CD4-positive, alpha-beta memory T cell (primary cell): ENCODE measurements at regions of chr20 and their contacts with region 1.

Region 1: DNA sequence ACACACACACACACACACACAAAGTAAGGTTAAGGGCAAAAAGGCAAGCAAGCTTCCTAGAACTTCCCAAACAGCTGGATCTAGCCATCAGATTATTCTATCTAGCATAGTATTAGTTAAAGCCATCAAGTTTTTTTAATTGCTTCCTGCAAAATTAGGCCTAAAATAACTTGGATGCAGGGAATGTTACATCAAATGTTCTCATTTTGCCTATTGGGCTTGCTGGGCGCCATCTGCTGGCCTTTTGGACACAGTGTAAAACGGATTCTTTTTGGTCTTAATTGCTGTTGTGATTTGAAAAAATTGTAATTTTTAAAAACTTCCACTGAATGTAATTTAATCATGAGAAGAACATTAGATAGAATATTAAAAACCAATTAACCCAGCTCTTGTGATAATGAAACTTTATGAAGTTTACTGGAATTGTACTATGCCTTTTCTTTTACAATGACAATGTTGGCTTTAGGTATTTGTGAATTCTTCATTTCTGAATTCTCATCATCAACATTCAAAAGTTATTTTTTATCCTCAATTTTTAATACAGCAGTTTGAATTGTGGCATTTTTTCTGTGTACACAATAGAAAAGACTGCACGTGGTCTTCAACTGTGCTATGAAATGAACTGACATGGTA is 6.8 kb downstream of the MKKS start:
- DNase-seq: peak; percentile 33 to 53 (median 43)
- H3K4me3 ChIP-seq: no peak overlapping the region
- H3K4me3 Mint-ChIP-seq: no peak overlapping the region
- H3K27ac ChIP-seq: no peak overlapping the region
- H3K27ac Mint-ChIP-seq: peak overlapping the region in 3 of 7 donors; percentile 1 to 63 (median 43)
- H3K4me1 ChIP-seq: peaks cover 17% of the 10 kb centered on the region
- H3K4me1 Mint-ChIP-seq: peaks cover 27 to 41% (median 38%) of the 10 kb centered on the region in 4 donors
- H3K27me3 ChIP-seq: no peaks in the 10 kb centered on the region
- H3K27me3 Mint-ChIP-seq: no peaks in the 10 kb centered on the region

Region 2: GRCh38 chr20:10381493-10381892 is 45.7 kb before region 1 on chr20:
- CTCF ChIA-PET with region 1: interaction called, 10 read pairs
- POLR2A ChIA-PET with region 1: no interaction called
- intact Hi-C with region 1: no loop called
- DNase-seq: no peak
- H3K4me3 ChIP-seq: no peak overlapping the region
- H3K4me3 Mint-ChIP-seq: no peak overlapping the region
- H3K27ac ChIP-seq: no peak overlapping the region
- H3K27ac Mint-ChIP-seq: no peak overlapping the region
- H3K4me1 ChIP-seq: no peaks in the 10 kb centered on the region
- H3K4me1 Mint-ChIP-seq: no peaks in the 10 kb centered on the region
- H3K27me3 ChIP-seq: no peaks in the 10 kb centered on the region
- H3K27me3 Mint-ChIP-seq: peaks cover 3 to 7% of the 10 kb centered on the region in 2 donors

Region 3: GRCh38 chr20:10412591-10413408 is 14.4 kb before region 1 on chr20:
- CTCF ChIA-PET with region 1: interaction called, 15 read pairs
- POLR2A ChIA-PET with region 1: no interaction called
- intact Hi-C with region 1: no loop called
- DNase-seq: no peak
- H3K4me3 ChIP-seq: no peak overlapping the region
- H3K4me3 Mint-ChIP-seq: no peak overlapping the region
- H3K27ac ChIP-seq: no peak overlapping the region
- H3K27ac Mint-ChIP-seq: no peak overlapping the region
- H3K4me1 ChIP-seq: no peaks in the 10 kb centered on the region
- H3K4me1 Mint-ChIP-seq: peaks cover 0 to 19% (median 9%) of the 10 kb centered on the region in 4 donors
- H3K27me3 ChIP-seq: no peaks in the 10 kb centered on the region
- H3K27me3 Mint-ChIP-seq: no peaks in the 10 kb centered on the region

Region 4: GRCh38 chr20:10447027-10447426 is 19.9 kb after region 1 on chr20:
- CTCF ChIA-PET with region 1: interaction called, 15 read pairs
- POLR2A ChIA-PET with region 1: no interaction called
- intact Hi-C with region 1: no loop called
- DNase-seq: peak; percentile 26 to 74 (median 37)
- H3K4me3 ChIP-seq: no peak overlapping the region
- H3K4me3 Mint-ChIP-seq: peak overlapping the region; percentile 47 to 89 (median 76)
- H3K27ac ChIP-seq: no peak overlapping the region
- H3K27ac Mint-ChIP-seq: peak overlapping the region; percentile 9 to 88 (median 28)
- H3K4me1 ChIP-seq: peaks cover 16% of the 10 kb centered on the region
- H3K4me1 Mint-ChIP-seq: peaks cover 15 to 24% (median 17%) of the 10 kb centered on the region in 4 donors
- H3K27me3 ChIP-seq: no peaks in the 10 kb centered on the region
- H3K27me3 Mint-ChIP-seq: no peaks in the 10 kb centered on the region

Region 5: DNA sequence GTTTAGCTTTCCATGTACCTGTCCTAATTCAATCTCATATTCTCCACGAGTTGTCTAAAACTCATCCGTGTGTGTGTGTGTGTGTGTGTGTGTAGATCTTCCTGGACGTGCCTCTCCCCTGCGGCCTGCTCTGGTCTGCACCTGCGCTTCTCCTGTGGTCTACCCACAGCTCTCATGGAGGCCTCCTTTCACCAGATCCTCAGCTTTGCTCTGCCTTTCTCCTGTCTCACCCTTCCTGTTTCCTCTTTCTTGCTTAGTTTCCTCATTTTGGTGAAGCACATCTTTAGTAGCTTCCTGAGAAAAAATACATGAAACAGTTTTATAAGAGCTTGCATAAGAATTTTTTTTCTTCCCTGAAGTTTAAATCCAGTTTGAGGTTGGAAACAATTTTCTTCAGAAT is 26.1 kb after region 1 on chr20:
- CTCF ChIA-PET with region 1: interaction called, 11 read pairs
- POLR2A ChIA-PET with region 1: no interaction called
- intact Hi-C with region 1: no loop called
- DNase-seq: peak; percentile 10 to 43 (median 18)
- H3K4me3 ChIP-seq: no peak overlapping the region
- H3K4me3 Mint-ChIP-seq: peak overlapping the region; percentile 28 to 78 (median 66)
- H3K27ac ChIP-seq: peak overlapping the region; percentile 34
- H3K27ac Mint-ChIP-seq: peak overlapping the region; percentile 66 to 95 (median 92)
- H3K4me1 ChIP-seq: peaks cover 18% of the 10 kb centered on the region
- H3K4me1 Mint-ChIP-seq: peaks cover 16 to 22% (median 18%) of the 10 kb centered on the region in 4 donors
- H3K27me3 ChIP-seq: no peaks in the 10 kb centered on the region
- H3K27me3 Mint-ChIP-seq: no peaks in the 10 kb centered on the region

Region 6: GRCh38 chr20:10565191-10565921 is 138.2 kb after region 1 on chr20:
- CTCF ChIA-PET with region 1: no interaction called
- POLR2A ChIA-PET with region 1: no interaction called
- intact Hi-C with region 1: no loop called
- DNase-seq: no peak
- H3K4me3 ChIP-seq: no peak overlapping the region
- H3K4me3 Mint-ChIP-seq: no peak overlapping the region
- H3K27ac ChIP-seq: no peak overlapping the region
- H3K27ac Mint-ChIP-seq: no peak overlapping the region
- H3K4me1 ChIP-seq: no peaks in the 10 kb centered on the region
- H3K4me1 Mint-ChIP-seq: peaks cover 16 to 55% (median 26%) of the 10 kb centered on the region in 4 donors
- H3K27me3 ChIP-seq: no peaks in the 10 kb centered on the region
- H3K27me3 Mint-ChIP-seq: no peaks in the 10 kb centered on the region